Dendritic cell treated with granulocyte-macrophage colony-stimulating factor and Interleukin-4, amounts not matched to agents 40 ng/mL and 50 ng/mL, for 4 days (primary cell): ENCODE measurements at regions of chr1 and their contacts with region 1.

Region 1: DNA sequence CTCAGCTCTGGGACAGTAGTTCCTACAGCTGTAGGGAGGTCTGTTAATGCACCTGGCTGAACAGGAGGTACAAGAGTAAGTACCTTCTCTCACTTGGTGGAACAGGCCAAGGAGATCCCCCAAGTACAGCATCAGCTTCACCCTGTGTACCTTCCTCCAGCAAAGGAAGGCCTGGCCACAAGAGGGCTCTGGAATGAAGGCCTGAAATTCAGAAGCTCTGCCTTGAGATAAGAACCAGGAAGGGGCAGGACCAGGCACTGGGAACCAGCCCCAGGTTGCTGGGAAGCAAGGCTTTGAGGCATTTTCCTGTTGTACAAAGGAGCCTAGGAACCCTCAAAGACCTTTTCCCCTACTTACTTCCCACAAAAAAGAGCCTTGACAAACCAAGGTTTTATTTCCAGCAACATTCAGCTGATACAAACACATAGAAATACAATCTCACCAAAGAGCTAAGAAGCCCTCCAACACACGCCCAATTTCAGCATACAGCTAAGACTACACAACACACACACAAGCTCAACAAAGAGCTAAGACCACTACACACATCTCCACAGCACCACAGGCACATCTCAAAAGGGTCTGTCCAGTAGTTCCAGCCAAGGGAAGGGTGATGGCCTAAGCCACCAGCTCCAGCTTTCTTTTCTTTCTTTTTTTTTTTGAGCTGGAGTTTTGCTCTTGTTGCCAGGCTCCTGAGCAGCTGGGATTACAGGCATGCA is 23.5 kb downstream of the F11R start:
- H3K4me3 Mint-ChIP-seq: no peak overlapping the region
- H3K27ac Mint-ChIP-seq: peak overlapping the region; percentile 50
- H3K4me1 Mint-ChIP-seq: peaks cover 10% of the 10 kb centered on the region
- H3K27me3 Mint-ChIP-seq: peaks cover 1% of the 10 kb centered on the region

Region 2: GRCh38 chr1:160963521-160963920 is 34.0 kb before region 1 on chr1:
- intact Hi-C with region 1: no loop called
- H3K4me3 Mint-ChIP-seq: no peak overlapping the region
- H3K27ac Mint-ChIP-seq: no peak overlapping the region
- H3K4me1 Mint-ChIP-seq: no peaks in the 10 kb centered on the region
- H3K27me3 Mint-ChIP-seq: peaks cover 4% of the 10 kb centered on the region

Region 3: GRCh38 chr1:161139765-161140164 is 142.3 kb after region 1 on chr1:
- intact Hi-C with region 1: loop called (anchors 1 kb)
- H3K4me3 Mint-ChIP-seq: no peak overlapping the region
- H3K27ac Mint-ChIP-seq: peak overlapping the region; percentile 87
- H3K4me1 Mint-ChIP-seq: peaks cover 45% of the 10 kb centered on the region
- H3K27me3 Mint-ChIP-seq: no peaks in the 10 kb centered on the region